ENCODE measurements at regions of chr10 and their contacts with region 1.

Region 1: DNA sequence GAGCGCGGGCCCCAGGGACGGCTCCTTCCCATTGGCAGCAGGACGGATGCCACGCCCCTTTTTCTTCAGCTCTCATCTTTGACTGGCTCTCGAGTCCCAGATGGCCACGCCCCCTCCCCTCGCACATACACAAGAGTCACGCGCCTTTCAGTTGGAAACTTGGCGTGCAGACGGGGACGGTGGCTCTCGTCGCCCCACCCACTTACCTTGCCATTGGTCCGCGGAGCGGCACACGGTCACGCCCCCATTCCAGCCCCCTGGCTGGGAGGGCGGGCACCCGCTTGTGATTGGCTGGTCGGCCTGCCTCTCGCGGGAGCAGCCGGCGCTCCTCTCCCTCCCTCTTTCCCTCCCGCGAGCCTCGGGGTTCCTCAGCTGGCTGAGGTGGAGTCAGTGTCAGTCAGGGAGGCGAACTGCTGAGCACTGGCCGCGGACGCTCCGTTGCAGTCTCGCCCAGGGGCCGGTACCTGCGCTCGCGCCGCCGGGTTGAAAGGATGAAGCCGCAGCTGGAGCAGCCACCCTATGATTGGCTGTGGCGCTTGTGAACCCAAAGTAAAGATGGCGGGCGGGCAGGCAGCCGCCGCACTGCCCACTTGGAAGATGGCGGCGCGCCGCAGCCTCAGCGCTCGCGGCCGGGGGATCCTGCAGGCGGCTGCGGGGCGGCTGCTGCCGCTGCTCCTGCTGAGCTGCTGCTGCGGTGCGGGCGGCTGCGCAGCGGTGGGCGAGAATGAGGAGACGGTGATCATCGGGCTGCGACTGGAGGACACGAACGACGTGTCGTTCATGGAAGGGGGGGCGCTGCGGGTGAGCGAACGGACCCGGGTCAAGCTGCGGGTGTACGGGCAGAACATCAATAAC is at the start of gene CNNM2:
- DNase-seq: peak; percentile 99
- ATAC-seq: peak; percentile 92
- H3K4me3 ChIP-seq: peak within 1 kb of the TSS; percentile 75 to 77
- H3K27ac ChIP-seq: peak within 1 kb of the TSS; percentile 81
- H3K4me1 ChIP-seq: peaks cover 25% of the 10 kb centered on the region
- H3K27me3 ChIP-seq: no peaks in the 10 kb centered on the region
- CTCF ChIP-seq: no peak
- total RNA-seq, gene CNNM2: 27.1 TPM

Region 2: GRCh38 chr10:102764389-102765178 is 153.6 kb before region 1 on chr10:
- CTCF ChIA-PET with region 1: no interaction called
- POLR2A ChIA-PET with region 1: no interaction called
- in situ Hi-C with region 1: no loop called
- intact Hi-C with region 1: no loop called
- DNase-seq: no peak
- ATAC-seq: peak; percentile 23; the same call in 1 of the 2 replicates
- H3K4me3 ChIP-seq: no peak overlapping the region
- H3K27ac ChIP-seq: peak overlapping the region; percentile 84
- H3K4me1 ChIP-seq: peaks cover 60% of the 10 kb centered on the region
- H3K27me3 ChIP-seq: no peaks in the 10 kb centered on the region
- CTCF ChIP-seq: no peak

Region 3: DNA sequence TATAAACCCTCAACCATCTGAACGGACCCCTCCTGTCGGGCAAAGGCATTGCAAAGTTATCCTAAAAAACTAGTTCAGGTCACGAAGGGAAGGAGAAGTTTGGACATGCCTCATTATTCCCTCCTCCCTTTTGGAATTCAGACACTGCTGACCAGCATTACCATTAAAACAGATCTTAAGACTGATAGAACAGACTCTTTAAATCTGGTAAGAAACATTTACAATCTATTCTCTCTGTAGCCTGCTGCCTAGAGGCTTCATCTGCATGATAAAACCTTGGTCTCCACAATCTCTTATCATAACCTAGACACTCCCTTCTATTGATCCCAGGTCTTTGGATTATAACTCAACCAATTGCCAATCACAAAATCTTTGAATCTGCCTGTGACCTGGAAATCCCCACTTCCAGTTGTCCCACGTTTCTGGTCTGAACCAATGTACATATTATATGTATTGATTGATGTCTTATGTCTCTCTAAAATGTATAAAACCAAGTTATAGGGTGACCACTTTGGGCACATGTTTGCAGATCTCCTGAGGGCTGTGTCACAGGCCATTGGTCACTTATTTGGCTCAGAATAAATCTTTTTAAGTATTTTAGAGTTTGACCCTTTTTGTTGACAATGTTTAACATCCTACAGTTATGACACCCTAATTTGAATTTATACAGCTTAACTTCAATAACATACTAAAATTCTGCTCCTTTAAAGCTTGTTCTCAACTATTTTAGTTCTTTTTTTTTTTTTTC is 23.5 kb before region 1 on chr10:
- CTCF ChIA-PET with region 1: interaction called, 5 read pairs
- POLR2A ChIA-PET with region 1: interaction called, 12 read pairs
- in situ Hi-C with region 1: no loop called
- intact Hi-C with region 1: no loop called
- DNase-seq: no peak
- ATAC-seq: no peak
- H3K4me3 ChIP-seq: no peak overlapping the region
- H3K27ac ChIP-seq: no peak overlapping the region
- H3K4me1 ChIP-seq: no peaks in the 10 kb centered on the region
- H3K27me3 ChIP-seq: no peaks in the 10 kb centered on the region
- CTCF ChIP-seq: no peak

Region 4: GRCh38 chr10:102951316-102951715 is 33.1 kb after region 1 on chr10:
- CTCF ChIA-PET with region 1: interaction called, 10 read pairs
- POLR2A ChIA-PET with region 1: no interaction called
- in situ Hi-C with region 1: no loop called
- intact Hi-C with region 1: no loop called
- DNase-seq: no peak
- ATAC-seq: no peak
- H3K4me3 ChIP-seq: no peak overlapping the region
- H3K27ac ChIP-seq: no peak overlapping the region
- H3K4me1 ChIP-seq: no peaks in the 10 kb centered on the region
- H3K27me3 ChIP-seq: no peaks in the 10 kb centered on the region
- CTCF ChIP-seq: no peak

Region 5: DNA sequence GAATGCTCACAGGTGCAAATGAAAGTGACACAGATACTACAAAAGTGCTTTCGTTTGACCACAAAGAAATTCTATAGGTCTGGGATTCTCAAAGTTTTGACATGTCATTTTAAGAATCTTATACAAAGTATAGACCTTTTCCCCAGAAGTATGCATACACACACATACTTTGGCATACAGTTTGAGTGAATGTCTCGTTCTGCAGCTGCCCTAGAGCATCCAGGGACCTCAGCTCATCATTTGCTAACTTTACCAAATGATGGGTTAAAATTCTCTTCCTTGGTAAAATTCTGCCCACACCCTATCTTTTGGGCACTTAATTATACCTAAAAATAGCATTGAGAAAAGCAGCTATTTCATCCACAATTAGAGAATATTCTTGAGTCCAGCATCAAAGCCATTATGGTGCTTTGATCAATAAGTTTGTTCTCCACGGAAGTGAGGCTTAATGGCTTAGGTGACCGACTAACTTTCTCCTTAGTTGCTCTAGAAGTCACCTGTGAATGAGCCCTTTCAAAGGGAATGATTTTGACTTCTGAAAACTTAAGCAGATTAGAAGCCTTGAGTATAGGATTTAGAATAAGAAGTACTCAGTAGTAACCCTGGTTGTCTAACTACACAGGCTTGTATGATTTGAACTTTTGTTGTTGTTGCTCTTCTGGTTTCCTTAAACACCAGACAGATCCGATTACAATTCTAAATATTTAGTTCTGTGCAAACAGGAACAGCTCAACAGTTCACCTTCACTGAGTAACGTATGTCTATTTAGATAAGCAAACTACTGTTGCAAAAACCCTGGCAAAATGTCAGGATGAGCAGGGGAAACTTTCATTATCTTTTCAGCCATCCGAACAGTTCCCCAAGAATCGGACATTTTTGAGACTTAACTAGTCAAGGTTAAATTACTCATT is 70.5 kb after region 1 on chr10:
- CTCF ChIA-PET with region 1: no interaction called
- POLR2A ChIA-PET with region 1: interaction called, 3 read pairs
- in situ Hi-C with region 1: no loop called
- intact Hi-C with region 1: loop called (anchors 2 kb)
- DNase-seq: no peak
- ATAC-seq: peak; percentile 58; the same call in 1 of the 2 replicates
- H3K4me3 ChIP-seq: no peak overlapping the region
- H3K27ac ChIP-seq: peak overlapping the region; percentile 32; the same call in 1 of the 2 replicates
- H3K4me1 ChIP-seq: peaks cover 9% of the 10 kb centered on the region
- H3K27me3 ChIP-seq: no peaks in the 10 kb centered on the region
- CTCF ChIP-seq: no peak

Region 6: GRCh38 chr10:103045961-103046360 is 127.8 kb after region 1 on chr10:
- CTCF ChIA-PET with region 1: no interaction called
- POLR2A ChIA-PET with region 1: no interaction called
- in situ Hi-C with region 1: no loop called
- intact Hi-C with region 1: no loop called
- DNase-seq: no peak
- ATAC-seq: no peak
- H3K4me3 ChIP-seq: no peak overlapping the region
- H3K27ac ChIP-seq: no peak overlapping the region
- H3K4me1 ChIP-seq: no peaks in the 10 kb centered on the region
- H3K27me3 ChIP-seq: no peaks in the 10 kb centered on the region
- CTCF ChIP-seq: no peak

Region 7: DNA sequence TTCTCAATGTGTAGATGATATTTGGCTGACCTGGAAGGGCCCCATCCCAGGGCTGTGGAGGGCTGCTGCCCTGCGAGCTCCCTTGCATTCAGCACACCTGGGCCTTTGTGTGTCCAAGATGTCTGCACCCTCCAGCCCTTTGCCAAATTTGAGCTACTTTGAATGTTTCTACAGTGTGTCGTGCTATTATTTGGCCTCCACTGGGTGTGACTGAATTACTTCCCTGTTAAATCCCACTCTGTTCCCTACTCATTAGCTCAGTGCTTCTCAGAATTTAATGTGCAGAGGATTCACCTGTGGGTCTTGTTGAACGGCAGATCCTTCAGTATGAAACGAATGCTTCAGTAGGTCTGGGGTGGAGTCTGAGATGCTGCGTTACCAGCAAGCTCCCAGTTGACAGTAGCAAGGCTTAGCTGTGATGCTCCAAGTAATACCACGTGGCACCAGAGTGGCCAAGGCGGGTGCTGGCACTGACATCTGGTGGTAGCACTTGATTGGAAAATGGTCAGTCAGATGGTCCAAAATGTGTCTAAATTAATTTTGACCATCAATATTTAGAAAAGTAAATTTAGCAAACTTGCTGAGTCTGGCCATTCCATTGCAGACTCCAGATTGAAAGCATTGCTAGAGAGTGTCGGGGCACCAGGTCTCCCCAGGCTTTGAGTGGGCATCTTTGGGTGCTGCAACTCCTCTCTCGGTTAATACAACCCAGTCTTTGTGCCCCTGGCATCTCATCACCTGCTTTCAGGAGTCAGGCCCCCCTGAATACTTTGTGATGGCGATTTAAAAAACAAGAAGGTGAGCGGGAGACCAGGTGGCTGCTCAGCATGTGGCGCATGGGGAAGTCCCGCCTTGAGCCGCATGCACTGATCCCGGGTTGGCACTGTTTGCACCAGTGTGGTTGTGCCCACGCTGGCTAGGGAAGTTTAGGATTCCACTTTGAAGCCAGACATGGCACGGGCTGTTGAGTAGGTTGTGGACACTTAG is 144.7 kb after region 1 on chr10:
- CTCF ChIA-PET with region 1: interaction called, 12 read pairs
- POLR2A ChIA-PET with region 1: no interaction called
- in situ Hi-C with region 1: no loop called
- intact Hi-C with region 1: no loop called
- DNase-seq: no peak
- ATAC-seq: peak; percentile 83
- H3K4me3 ChIP-seq: no peak overlapping the region
- H3K27ac ChIP-seq: no peak overlapping the region
- H3K4me1 ChIP-seq: no peaks in the 10 kb centered on the region
- H3K27me3 ChIP-seq: no peaks in the 10 kb centered on the region
- CTCF ChIP-seq: peak; percentile 57

Region 8: DNA sequence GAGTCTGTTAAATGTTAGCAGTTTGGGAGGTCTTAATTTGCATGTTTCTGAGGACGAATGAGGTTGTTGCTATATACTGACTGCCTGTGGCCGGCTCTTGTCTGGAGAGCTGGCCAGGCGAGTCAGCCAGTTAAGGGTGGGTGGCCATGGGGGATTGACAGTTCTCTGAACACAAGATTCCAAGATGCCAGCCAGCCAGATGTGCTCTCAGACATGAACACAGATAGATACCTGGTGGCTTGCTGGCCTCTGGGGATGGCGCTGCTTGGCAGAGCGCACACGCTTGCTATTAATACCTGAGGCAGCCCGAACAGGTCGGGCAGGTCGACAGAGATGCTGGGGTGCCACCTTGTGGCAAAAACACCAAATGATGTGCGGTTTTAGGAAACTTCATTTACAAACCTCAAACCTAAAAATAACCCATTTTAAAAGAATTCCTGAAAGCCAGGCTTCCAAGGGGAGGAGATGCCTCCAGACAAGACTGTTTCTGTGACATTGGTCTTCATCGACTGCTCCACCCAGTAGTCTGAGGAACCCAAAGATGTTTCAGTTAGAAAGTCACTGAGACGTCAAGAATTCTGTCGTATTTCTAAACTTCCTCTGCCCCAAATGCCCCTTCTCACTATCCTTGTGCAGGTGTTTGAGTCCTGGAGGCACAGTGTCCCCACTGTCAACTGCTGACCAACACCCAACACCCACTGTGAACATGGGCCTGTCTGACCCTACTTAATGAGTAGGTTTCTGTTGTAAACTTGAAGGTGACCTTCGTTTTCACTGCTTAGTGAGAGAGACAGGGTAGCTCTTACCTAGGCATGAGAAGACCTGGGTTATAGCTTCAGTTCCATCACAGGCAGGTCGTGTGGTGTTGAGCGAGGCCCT is 151.5 kb after region 1 on chr10:
- CTCF ChIA-PET with region 1: interaction called, 12 read pairs
- POLR2A ChIA-PET with region 1: no interaction called
- in situ Hi-C with region 1: no loop called
- intact Hi-C with region 1: loop called (anchors 1 kb)
- DNase-seq: no peak
- ATAC-seq: peak; percentile 84
- H3K4me3 ChIP-seq: no peak overlapping the region
- H3K27ac ChIP-seq: no peak overlapping the region
- H3K4me1 ChIP-seq: no peaks in the 10 kb centered on the region
- H3K27me3 ChIP-seq: no peaks in the 10 kb centered on the region
- CTCF ChIP-seq: peak; percentile 90

Measured in Panc1 (cell line).